T-cell (primary cell): ENCODE measurements at regions of chr6 and their contacts with region 1.

Region 1: DNA sequence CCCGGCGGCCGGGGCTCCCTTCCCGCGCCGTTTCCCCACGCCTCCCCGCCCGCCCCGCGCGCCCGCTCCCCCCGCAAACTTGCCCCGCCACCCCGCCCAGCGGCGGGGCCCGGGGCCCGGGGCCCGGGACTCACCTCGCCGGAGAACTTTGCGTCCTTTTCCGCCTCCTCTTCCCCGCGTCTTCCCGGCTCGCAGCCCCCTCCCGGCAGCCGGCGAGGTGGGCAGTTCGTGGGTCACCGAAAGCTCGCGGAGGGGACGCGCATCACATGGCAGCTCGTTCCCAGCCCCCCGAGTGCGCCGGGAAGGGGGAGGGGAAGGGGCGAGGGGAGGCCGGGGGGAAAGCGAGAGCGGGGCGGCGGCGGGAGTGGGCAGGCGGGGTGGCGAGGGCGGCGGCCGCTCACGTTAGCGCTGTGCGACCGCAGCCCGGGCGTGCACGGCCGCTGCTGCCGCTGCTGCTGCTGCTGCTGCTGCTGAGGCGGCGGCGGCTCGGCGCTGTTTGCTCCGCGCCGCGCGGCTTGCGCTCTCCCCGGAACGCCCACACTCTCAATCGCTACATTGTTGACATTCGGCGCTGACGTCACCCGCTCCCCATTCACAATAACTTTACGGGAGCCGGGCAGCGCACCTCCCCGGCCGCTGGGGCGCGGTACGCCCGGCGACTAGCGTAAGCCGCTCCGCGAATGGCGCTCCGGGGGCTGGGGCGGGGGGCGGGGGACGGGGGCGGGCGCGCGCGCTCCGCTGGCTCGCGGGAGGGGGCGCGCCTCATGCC is at the start of gene BACH2:
- DNase-seq: peak; percentile 83 to 98 (median 95)
- ATAC-seq: peak; percentile 69 to 81 (median 72)
- H3K4me3 ChIP-seq: peak within 1 kb of the TSS; percentile 79 to 93
- H3K4me3 Mint-ChIP-seq: peak within 1 kb of the TSS; percentile 84 to 92 (median 92)
- H3K27ac ChIP-seq: peak within 1 kb of the TSS; percentile 81
- H3K27ac Mint-ChIP-seq: peak within 1 kb of the TSS; percentile 88 to 94
- H3K4me1 ChIP-seq: peaks cover 18 to 37% of the 10 kb centered on the region in 2 experiments
- H3K4me1 Mint-ChIP-seq: peaks cover 30 to 43% (median 34%) of the 10 kb centered on the region in 3 donors
- H3K27me3 ChIP-seq: peaks cover 0 to 8% of the 10 kb centered on the region in 2 experiments
- H3K27me3 Mint-ChIP-seq: peaks cover 0 to 4% of the 10 kb centered on the region in 2 donors
- total RNA-seq, gene BACH2: 81.9 to 196 (median 96.7) TPM

Region 2: DNA sequence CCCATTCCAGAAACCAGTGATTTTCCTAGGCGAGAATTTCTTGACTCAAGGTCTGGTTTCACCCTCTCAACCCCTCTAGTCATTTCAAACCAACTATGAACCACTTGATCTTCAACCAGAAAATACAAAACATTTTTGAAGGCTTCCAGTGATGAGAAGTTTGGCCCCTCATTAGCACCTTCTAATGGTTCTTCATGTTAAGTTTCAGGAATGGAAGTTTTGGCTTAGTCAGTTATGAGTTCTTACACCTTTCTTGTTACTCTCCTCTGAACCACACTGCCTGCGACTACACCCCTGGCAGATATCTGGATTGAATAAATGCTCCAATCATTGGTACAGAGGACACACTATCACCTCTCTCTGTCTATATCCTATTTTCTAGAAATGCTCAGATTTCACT is 335.0 kb before region 1 on chr6:
- CTCF ChIA-PET with region 1: no interaction called
- POLR2A ChIA-PET with region 1: interaction called in 1 of 2 experiments, 10 read pairs
- DNase-seq: no peak
- ATAC-seq: no peak
- H3K4me3 ChIP-seq: no peak overlapping the region
- H3K4me3 Mint-ChIP-seq: no peak overlapping the region
- H3K27ac ChIP-seq: no peak overlapping the region
- H3K27ac Mint-ChIP-seq: peak overlapping the region in 1 of 2 donors; percentile 55
- H3K4me1 ChIP-seq: peaks cover 0 to 9% of the 10 kb centered on the region in 2 experiments
- H3K4me1 Mint-ChIP-seq: peaks cover 57 to 63% (median 63%) of the 10 kb centered on the region in 3 donors
- H3K27me3 ChIP-seq: no peaks in the 10 kb centered on the region
- H3K27me3 Mint-ChIP-seq: no peaks in the 10 kb centered on the region

Region 3: GRCh38 chr6:90285611-90286381 is 10.7 kb before region 1 on chr6:
- CTCF ChIA-PET with region 1: interaction called, 5 to 11 read pairs
- POLR2A ChIA-PET with region 1: interaction called, 4 to 8 read pairs
- DNase-seq: peak in 23 of 35 experiments; percentile 21 to 68 (median 34)
- ATAC-seq: peak; percentile 61 to 67 (median 62)
- H3K4me3 ChIP-seq: peak overlapping the region; percentile 39 to 67
- H3K4me3 Mint-ChIP-seq: peak overlapping the region; percentile 78 to 90 (median 84)
- H3K27ac ChIP-seq: peak overlapping the region; percentile 70
- H3K27ac Mint-ChIP-seq: peak overlapping the region; percentile 94 to 98
- H3K4me1 ChIP-seq: peaks cover 36 to 73% of the 10 kb centered on the region in 2 experiments
- H3K4me1 Mint-ChIP-seq: peaks cover 91 to 98% (median 92%) of the 10 kb centered on the region in 3 donors
- H3K27me3 ChIP-seq: no peaks in the 10 kb centered on the region
- H3K27me3 Mint-ChIP-seq: no peaks in the 10 kb centered on the region